OCI-LY7 (cell line): ENCODE measurements at regions of chr19 and their contacts with region 1.

Region 1: GRCh38 chr19:28427376-28428083 is 785.4 kb downstream of the UQCRFS1 start:
- DNase-seq: no peak
- H3K4me3 ChIP-seq: no peak overlapping the region
- H3K27ac ChIP-seq: peak overlapping the region; percentile 86
- H3K4me1 ChIP-seq: peaks cover 70% of the 10 kb centered on the region
- CTCF ChIP-seq: no peak

Region 2: GRCh38 chr19:28393574-28394336 is 33.8 kb before region 1 on chr19:
- CTCF ChIA-PET with region 1: no interaction called
- POLR2A ChIA-PET with region 1: interaction called, 4 read pairs
- intact Hi-C with region 1: loop called (anchors 1 kb)
- DNase-seq: peak; percentile 85
- H3K4me3 ChIP-seq: peak overlapping the region; percentile 7
- H3K27ac ChIP-seq: peak overlapping the region; percentile 70
- H3K4me1 ChIP-seq: peaks cover 28% of the 10 kb centered on the region
- CTCF ChIP-seq: no peak

Region 3: DNA sequence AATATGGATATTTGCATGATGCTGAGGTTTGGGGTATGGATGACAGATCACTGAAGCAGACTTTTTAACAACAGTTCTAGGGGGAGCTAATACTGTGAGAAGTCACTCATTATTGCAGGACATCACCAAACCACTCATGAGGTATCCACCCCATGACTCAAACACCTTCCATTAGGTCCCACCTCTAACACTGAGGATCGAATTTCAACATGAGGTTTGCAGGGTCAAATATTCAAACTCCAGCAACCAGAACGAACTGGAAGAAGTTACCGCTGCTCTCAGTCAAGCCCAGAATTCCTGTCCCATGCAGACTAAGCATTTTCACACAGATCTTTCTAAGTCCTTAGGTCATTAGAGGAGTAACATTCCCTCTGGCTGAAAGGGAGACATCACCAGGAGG is 26.6 kb after region 1 on chr19:
- CTCF ChIA-PET with region 1: no interaction called
- POLR2A ChIA-PET with region 1: no interaction called
- intact Hi-C with region 1: no loop called
- DNase-seq: no peak
- H3K4me3 ChIP-seq: no peak overlapping the region
- H3K27ac ChIP-seq: no peak overlapping the region
- H3K4me1 ChIP-seq: no peaks in the 10 kb centered on the region
- CTCF ChIP-seq: no peak

Region 4: GRCh38 chr19:28497137-28497536 is 69.6 kb after region 1 on chr19:
- CTCF ChIA-PET with region 1: no interaction called
- POLR2A ChIA-PET with region 1: no interaction called
- intact Hi-C with region 1: loop called (anchors 2 kb)
- DNase-seq: no peak
- H3K4me3 ChIP-seq: no peak overlapping the region
- H3K27ac ChIP-seq: no peak overlapping the region
- H3K4me1 ChIP-seq: peaks cover 8% of the 10 kb centered on the region
- CTCF ChIP-seq: no peak